Activated CD8-positive, alpha-beta T cell treated with anti-CD3 and anti-CD28 coated beads, Interleukin-2, amount 10 ng/mL, durations not matched to agents 7 days and 5 days (primary cell): ENCODE measurements at regions of chr1 and their contacts with region 1.

Region 1: GRCh38 chr1:241611063-241611462 is 29.1 kb downstream of the CHML start:
- DNase-seq: no peak
- ATAC-seq: peak; percentile 86
- H3K4me3 Mint-ChIP-seq: no peak overlapping the region
- H3K27ac Mint-ChIP-seq: no peak overlapping the region
- H3K4me1 Mint-ChIP-seq: peaks cover 6% of the 10 kb centered on the region
- H3K27me3 Mint-ChIP-seq: no peaks in the 10 kb centered on the region

Region 2: DNA sequence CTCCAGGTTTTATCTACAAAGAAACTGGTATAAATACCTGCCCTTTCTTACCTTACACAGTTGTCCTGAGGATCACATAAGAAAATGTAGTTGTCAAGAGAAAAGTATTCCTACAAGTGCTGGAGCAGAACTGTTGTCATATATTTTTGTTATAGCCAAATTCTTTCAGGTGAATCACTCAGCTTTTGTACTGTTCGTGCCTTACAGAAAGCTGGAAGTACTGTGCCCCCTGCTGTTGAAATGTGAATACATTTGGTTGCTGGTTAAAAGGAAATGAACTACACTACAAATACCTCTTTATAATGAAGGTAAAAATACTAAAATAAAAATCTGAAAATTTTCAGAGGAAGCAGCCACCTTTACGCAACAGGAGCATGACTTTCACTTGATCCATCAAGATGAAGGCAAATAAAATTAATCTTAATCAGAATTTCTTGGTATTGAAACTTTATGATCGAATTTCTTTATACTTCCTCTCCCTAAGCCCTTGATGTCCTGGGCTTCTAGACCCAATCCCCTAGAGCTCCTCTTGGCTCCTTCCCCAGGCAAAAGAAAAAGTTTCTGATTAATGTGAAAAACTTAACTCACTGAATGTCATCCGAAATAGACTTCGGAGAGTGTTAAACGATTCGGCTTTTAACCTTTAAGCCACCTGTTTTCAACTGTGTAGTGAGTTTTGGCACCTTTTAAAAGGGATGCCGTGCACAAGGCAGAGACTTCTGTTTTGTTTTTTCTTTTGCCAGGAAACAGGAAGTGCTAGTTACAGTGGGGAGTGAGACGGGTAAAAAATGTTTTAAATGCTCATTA is 16.6 kb after region 1 on chr1:
- CTCF ChIA-PET with region 1: interaction called, 57 read pairs
- POLR2A ChIA-PET with region 1: no interaction called
- DNase-seq: peak; percentile 66
- ATAC-seq: peak; percentile 84
- H3K4me3 Mint-ChIP-seq: peak overlapping the region; percentile 69
- H3K27ac Mint-ChIP-seq: peak overlapping the region; percentile 89
- H3K4me1 Mint-ChIP-seq: peaks cover 25% of the 10 kb centered on the region
- H3K27me3 Mint-ChIP-seq: no peaks in the 10 kb centered on the region

Region 3: DNA sequence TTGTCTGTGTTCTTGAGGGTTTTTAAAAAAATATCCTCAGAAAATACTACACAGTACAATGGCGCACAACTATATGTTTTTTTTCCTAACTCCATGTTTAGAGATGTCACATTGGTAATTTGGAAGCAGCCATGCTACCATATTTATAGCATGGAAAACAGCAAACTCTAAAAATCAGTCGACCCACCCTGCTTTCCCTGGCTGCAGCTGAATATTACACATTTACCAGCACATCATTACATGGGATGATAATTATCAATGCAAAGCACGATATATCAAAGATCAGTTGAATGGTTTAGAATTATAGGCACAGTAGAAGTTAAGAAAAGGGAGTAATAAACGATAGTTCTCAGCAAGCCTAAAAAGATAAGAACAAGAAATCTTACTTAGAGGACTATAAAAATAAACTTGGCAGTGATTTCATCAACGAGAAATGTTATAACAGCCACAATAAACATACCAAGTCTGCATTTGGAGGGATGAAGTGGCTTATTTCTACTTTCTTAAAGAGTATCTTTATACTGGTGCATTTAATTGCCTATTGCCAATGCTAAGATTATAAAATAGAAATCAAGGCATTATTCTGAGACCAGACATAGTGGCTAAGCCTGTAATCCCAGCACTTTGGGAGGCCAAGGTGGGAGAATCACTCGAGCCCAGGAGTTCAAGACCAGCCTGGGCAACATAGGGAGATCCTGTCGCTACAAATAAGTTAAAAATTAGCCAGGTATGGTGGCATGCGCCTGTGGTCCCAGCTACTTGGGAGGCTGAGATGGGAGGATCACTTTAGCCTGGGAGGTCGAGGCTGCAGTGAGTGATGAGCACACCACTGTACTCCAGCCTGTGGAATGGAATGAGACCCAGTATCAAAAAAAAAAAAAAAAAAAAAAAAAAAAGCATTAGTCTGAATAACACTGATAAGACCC is 84.4 kb after region 1 on chr1:
- CTCF ChIA-PET with region 1: no interaction called
- POLR2A ChIA-PET with region 1: no interaction called
- DNase-seq: no peak
- ATAC-seq: no peak
- H3K4me3 Mint-ChIP-seq: no peak overlapping the region
- H3K27ac Mint-ChIP-seq: no peak overlapping the region
- H3K4me1 Mint-ChIP-seq: no peaks in the 10 kb centered on the region
- H3K27me3 Mint-ChIP-seq: peaks cover 2% of the 10 kb centered on the region

Region 4: GRCh38 chr1:241810769-241811405 is 199.8 kb after region 1 on chr1:
- CTCF ChIA-PET with region 1: no interaction called
- POLR2A ChIA-PET with region 1: no interaction called
- DNase-seq: no peak
- ATAC-seq: no peak
- H3K4me3 Mint-ChIP-seq: no peak overlapping the region
- H3K27ac Mint-ChIP-seq: no peak overlapping the region
- H3K4me1 Mint-ChIP-seq: no peaks in the 10 kb centered on the region
- H3K27me3 Mint-ChIP-seq: no peaks in the 10 kb centered on the region

Region 5: GRCh38 chr1:241847796-241848685 is 237.0 kb after region 1 on chr1 and contains the start of gene EXO1:
- CTCF ChIA-PET with region 1: interaction called, 12 read pairs
- POLR2A ChIA-PET with region 1: interaction called, 3 read pairs
- DNase-seq: peak; percentile 93
- ATAC-seq: peak; percentile 97
- H3K4me3 Mint-ChIP-seq: peak within 1 kb of the TSS; percentile 96
- H3K27ac Mint-ChIP-seq: peak within 1 kb of the TSS; percentile 100
- H3K4me1 Mint-ChIP-seq: peaks cover 32% of the 10 kb centered on the region
- H3K27me3 Mint-ChIP-seq: peaks cover 3% of the 10 kb centered on the region
- total RNA-seq, gene EXO1: 48.2 to 50.0 TPM

Region 6: DNA sequence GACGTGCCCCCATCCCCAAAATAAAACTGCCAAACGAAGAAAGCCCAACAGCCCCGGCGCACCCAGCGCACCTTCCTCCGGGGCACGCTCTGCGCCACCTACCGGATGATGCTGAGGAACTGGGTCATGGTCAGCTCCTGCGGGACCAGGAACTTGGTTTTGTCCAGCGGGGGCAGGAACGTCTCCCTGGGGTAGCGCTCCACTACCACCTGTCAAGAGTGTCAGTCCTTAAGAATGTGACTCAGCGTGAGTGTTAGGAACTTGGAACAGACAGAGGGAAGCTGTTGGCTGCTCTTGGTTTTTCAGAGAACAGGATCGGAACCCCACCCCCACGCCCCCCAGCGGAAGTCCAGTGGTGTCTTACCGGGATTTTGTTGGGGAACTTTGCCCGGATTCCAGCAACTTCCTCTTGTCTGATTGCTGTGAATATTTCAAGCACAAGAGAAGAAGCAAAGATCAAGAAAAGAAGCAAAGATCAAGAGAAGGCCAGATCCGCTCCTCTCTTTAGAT is 387.4 kb after region 1 on chr1:
- CTCF ChIA-PET with region 1: interaction called, 14 read pairs
- POLR2A ChIA-PET with region 1: no interaction called
- DNase-seq: peak; percentile 63
- ATAC-seq: peak; percentile 84
- H3K4me3 Mint-ChIP-seq: peak overlapping the region; percentile 63
- H3K27ac Mint-ChIP-seq: no peak overlapping the region
- H3K4me1 Mint-ChIP-seq: peaks cover 6% of the 10 kb centered on the region
- H3K27me3 Mint-ChIP-seq: no peaks in the 10 kb centered on the region